Left cardiac atrium (tissue), 4 donors: ENCODE measurements at regions of chr1 and their contacts with region 1.

Region 1: GRCh38 chr1:174968750-174969244 is 30.9 kb upstream of the CACYBP start:
- DNase-seq: no peak
- ATAC-seq: peak in 1 of 2 donors; percentile 29

Region 2: GRCh38 chr1:174892016-174892415 is 76.8 kb before region 1 on chr1:
- intact Hi-C with region 1: loop called in 1 of 2 experiments (anchors 10 kb)
- DNase-seq: peak; percentile 25
- ATAC-seq: peak; percentile 81 to 90